ENCODE measurements at regions of chr1 and their contacts with region 1.

Region 1: DNA sequence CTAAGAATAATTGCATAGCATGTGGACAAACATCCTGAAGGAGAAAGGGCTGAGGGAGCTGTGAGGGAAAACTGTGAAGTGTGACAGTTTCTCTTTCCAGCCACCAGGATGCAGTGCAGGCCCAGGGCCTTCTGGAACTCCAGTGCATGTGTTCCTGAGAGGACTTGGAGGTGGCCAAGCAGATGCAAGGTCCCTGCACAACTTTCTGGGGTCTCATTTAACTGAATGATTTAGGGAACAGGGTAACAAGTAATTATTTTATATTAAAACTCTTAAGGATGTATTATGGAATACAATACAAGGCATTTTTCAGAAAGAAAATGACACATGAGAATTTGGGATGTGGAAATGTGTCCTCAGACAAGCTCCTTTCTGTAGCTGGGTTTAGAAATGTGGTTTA is 61.2 kb upstream of the MCOLN3 start:
- DNase-seq: peak; percentile 56
- ATAC-seq: peak; percentile 87
- H3K4me3 Mint-ChIP-seq: no peak overlapping the region
- H3K27ac Mint-ChIP-seq: no peak overlapping the region
- H3K4me1 Mint-ChIP-seq: no peaks in the 10 kb centered on the region
- H3K27me3 Mint-ChIP-seq: peaks cover 4% of the 10 kb centered on the region
- CTCF ChIP-seq: peak; percentile 72

Region 2: GRCh38 chr1:85061711-85062424 is 47.6 kb before region 1 on chr1:
- CTCF ChIA-PET with region 1: no interaction called
- POLR2A ChIA-PET with region 1: no interaction called
- intact Hi-C with region 1: no loop called
- DNase-seq: peak; percentile 93
- ATAC-seq: peak; percentile 100
- H3K4me3 Mint-ChIP-seq: peak overlapping the region; percentile 76
- H3K27ac Mint-ChIP-seq: peak overlapping the region; percentile 78
- H3K4me1 Mint-ChIP-seq: peaks cover 12% of the 10 kb centered on the region
- H3K27me3 Mint-ChIP-seq: peaks cover 5% of the 10 kb centered on the region
- CTCF ChIP-seq: no peak

Region 3: DNA sequence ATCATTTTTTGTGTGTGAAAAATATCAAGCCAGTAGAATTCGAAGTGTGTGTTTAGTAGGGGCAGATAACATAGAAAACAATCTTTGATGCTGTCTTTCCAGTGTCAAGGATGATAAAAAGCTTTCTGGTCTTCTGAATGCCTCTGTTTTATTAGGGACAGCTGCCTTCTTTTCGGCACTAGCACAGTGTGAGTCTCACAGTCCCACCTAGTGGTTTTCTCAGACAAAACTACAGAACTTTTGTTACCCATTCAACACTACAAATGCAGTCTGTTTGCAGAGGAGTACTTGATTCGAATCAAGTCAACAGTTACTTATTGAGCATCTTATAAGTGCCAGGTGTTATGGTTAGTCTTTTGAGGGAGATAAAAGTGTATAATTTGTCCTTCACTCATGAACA is 30.6 kb before region 1 on chr1:
- CTCF ChIA-PET with region 1: no interaction called
- POLR2A ChIA-PET with region 1: no interaction called
- intact Hi-C with region 1: no loop called
- DNase-seq: no peak
- ATAC-seq: no peak
- H3K4me3 Mint-ChIP-seq: no peak overlapping the region
- H3K27ac Mint-ChIP-seq: no peak overlapping the region
- H3K4me1 Mint-ChIP-seq: no peaks in the 10 kb centered on the region
- H3K27me3 Mint-ChIP-seq: peaks cover 5% of the 10 kb centered on the region
- CTCF ChIP-seq: no peak

Region 4: DNA sequence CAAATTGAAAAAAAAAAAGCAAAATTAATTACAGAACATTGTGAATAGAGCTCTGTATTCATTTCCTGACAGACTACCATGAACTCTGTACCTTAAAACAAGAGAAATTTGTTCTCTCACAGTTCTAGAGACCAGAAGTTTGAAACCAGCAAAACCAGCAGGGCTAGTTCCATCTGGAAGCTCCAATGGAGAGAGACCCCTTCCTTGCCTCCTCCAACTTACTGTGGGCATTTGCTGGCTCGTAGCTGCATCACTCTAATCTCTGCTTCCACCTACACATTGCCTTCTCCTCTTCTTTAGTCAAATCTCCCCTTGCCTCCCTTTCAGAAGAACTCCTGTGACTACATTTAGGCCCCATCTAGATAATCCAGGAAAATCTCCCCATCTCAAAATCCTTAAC is 34.9 kb after region 1 on chr1:
- CTCF ChIA-PET with region 1: no interaction called
- POLR2A ChIA-PET with region 1: no interaction called
- intact Hi-C with region 1: no loop called
- DNase-seq: no peak
- ATAC-seq: no peak
- H3K4me3 Mint-ChIP-seq: no peak overlapping the region
- H3K27ac Mint-ChIP-seq: no peak overlapping the region
- H3K4me1 Mint-ChIP-seq: peaks cover 23% of the 10 kb centered on the region
- H3K27me3 Mint-ChIP-seq: peaks cover 4% of the 10 kb centered on the region
- CTCF ChIP-seq: no peak

Region 5: DNA sequence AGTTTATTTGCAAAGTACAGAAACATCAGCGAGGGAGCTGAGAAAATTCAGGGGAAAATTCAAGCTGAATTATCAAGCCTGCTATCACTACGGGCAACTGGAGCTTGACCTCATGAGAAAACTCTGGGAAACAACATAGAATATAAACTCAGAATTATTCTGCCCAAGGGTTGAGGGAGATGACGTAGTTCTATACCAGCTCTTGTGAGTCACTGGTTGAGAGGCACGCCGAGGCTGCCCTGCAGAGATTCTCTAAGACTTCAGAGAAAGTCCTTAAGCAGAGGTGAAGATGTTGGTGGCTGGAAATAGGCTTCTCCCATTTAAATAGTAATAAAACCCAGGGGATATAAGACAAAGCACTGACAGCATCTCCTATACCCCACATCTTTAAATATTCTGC is 79.1 kb after region 1 on chr1:
- CTCF ChIA-PET with region 1: no interaction called
- POLR2A ChIA-PET with region 1: no interaction called
- intact Hi-C with region 1: no loop called
- DNase-seq: no peak
- ATAC-seq: no peak
- H3K4me3 Mint-ChIP-seq: no peak overlapping the region
- H3K27ac Mint-ChIP-seq: no peak overlapping the region
- H3K4me1 Mint-ChIP-seq: peaks cover 2% of the 10 kb centered on the region
- H3K27me3 Mint-ChIP-seq: no peaks in the 10 kb centered on the region
- CTCF ChIP-seq: no peak

Region 6: GRCh38 chr1:85230305-85230980 is 121.0 kb after region 1 on chr1:
- CTCF ChIA-PET with region 1: interaction called, 11 read pairs
- POLR2A ChIA-PET with region 1: no interaction called
- intact Hi-C with region 1: no loop called
- DNase-seq: peak; percentile 14
- ATAC-seq: peak; percentile 49
- H3K4me3 Mint-ChIP-seq: no peak overlapping the region
- H3K27ac Mint-ChIP-seq: no peak overlapping the region
- H3K4me1 Mint-ChIP-seq: no peaks in the 10 kb centered on the region
- H3K27me3 Mint-ChIP-seq: no peaks in the 10 kb centered on the region
- CTCF ChIP-seq: peak; percentile 18

Region 7: GRCh38 chr1:85240174-85240601 is 130.7 kb after region 1 on chr1:
- CTCF ChIA-PET with region 1: interaction called, 17 read pairs
- POLR2A ChIA-PET with region 1: no interaction called
- intact Hi-C with region 1: no loop called
- DNase-seq: peak; percentile 46
- ATAC-seq: peak; percentile 84
- H3K4me3 Mint-ChIP-seq: no peak overlapping the region
- H3K27ac Mint-ChIP-seq: peak overlapping the region; percentile 48
- H3K4me1 Mint-ChIP-seq: peaks cover 13% of the 10 kb centered on the region
- H3K27me3 Mint-ChIP-seq: no peaks in the 10 kb centered on the region
- CTCF ChIP-seq: peak; percentile 46

Measured in activated CD8-positive, alpha-beta T cell treated with anti-CD3 and anti-CD28 coated beads for 36 hours (primary cell).